CD8-positive, alpha-beta T cell (primary cell): ENCODE measurements at regions of chr5 and their contacts with region 1.

Region 1: DNA sequence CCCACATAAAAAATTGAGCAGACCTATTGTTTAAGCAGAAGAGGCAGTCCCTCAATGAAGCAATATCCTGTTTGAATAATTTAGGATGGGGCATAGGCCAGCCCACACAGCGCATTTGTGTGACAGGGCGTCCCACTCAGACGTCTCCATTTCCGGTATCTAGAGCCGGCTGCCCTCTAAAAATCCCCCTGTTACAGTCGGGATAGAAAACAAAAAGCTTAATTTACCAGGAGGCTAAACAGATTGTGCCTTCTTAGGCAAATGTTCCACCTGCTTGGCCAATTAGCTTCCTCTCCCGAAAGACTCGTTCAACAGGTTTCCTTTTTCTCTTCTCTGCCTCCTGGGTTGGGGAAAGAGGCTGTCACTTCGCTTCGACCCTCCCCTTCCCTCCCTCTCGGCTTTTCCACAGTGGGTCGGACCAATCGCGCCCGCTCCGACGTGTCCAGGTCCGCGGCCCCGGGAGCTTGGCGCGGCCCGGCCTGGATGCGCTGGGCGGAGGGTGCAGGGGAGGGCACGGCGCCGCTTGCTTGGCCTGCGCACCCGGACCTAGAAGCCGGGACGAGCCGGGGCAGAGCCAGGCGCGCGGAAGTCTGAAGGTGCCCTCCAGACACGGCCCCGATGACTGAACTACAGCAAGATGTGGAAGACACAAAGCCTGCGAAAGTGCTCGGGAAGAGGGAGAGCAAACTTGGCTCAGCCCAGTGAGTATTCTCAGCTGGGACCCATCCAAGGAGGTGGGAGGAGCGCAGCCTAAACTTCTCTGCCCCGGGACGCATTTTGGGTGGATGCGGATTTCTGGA is at the start of gene GRAMD2B:
- DNase-seq: peak; percentile 34 to 90 (median 65)
- ATAC-seq: peak; percentile 93
- H3K4me3 ChIP-seq: peak within 1 kb of the TSS; percentile 78 to 84
- H3K4me3 Mint-ChIP-seq: peak within 1 kb of the TSS; percentile 91
- H3K27ac ChIP-seq: peak within 1 kb of the TSS; percentile 90 to 95
- H3K27ac Mint-ChIP-seq: peak within 1 kb of the TSS; percentile 95
- H3K4me1 ChIP-seq: peaks cover 21% of the 10 kb centered on the region
- H3K4me1 Mint-ChIP-seq: peaks cover 38% of the 10 kb centered on the region
- H3K27me3 ChIP-seq: no peaks in the 10 kb centered on the region
- H3K27me3 Mint-ChIP-seq: no peaks in the 10 kb centered on the region
- CTCF ChIP-seq: no peak
- total RNA-seq, gene GRAMD2B: 8.2 to 10.4 TPM

Region 2: DNA sequence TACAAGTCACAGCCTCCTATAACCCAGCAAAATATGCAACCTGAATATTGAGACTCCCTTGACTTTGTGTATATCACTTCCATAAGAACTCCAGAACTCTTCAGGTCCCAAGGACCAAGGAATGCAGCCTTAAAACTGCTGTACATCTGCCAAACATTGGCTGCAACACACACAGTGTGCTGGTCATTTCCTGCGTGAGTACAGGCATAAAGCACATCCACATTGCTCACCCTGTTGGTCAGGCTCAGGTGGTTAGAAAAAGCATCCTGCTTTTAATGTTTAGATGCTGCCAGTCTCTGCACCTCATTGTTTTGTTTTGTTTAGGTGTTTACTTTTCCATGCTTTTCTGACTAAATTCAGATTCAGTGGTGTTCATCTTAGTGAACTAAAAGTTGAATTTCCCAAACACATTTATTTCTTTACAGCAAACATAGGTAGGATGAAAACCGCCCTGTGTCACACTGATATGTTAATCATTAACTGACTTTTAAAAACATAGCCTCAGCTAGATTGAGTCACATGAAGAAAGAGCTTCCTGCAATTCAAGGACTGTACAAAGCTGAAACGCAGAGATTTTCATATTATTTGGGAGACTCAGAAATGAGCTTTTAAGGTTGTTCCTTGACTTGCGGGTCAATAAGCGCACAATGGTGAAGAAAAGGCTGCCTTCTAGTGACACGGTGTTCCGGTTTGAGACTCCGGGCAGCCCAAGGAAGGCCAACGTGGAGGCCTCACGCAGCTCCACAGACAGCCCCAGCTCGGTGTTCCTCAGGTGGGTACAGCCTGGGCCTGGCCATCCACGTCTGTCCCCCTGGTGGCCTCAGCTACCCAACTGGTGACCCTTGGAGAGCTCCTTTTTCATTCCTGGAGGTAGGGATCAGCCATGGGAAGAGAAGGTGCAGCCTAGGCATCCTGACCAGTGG is 52.1 kb before region 1 on chr5:
- CTCF ChIA-PET with region 1: no interaction called
- POLR2A ChIA-PET with region 1: no interaction called
- intact Hi-C with region 1: loop called in 1 of 2 experiments (anchors 5 kb)
- DNase-seq: no peak
- ATAC-seq: no peak
- H3K4me3 ChIP-seq: no peak overlapping the region
- H3K4me3 Mint-ChIP-seq: no peak overlapping the region
- H3K27ac ChIP-seq: no peak overlapping the region
- H3K27ac Mint-ChIP-seq: no peak overlapping the region
- H3K4me1 ChIP-seq: peaks cover 14% of the 10 kb centered on the region
- H3K4me1 Mint-ChIP-seq: peaks cover 18% of the 10 kb centered on the region
- H3K27me3 ChIP-seq: no peaks in the 10 kb centered on the region
- H3K27me3 Mint-ChIP-seq: no peaks in the 10 kb centered on the region
- CTCF ChIP-seq: no peak

Region 3: GRCh38 chr5:126403876-126404275 is 19.3 kb before region 1 on chr5:
- CTCF ChIA-PET with region 1: no interaction called
- POLR2A ChIA-PET with region 1: no interaction called
- intact Hi-C with region 1: no loop called
- DNase-seq: no peak
- ATAC-seq: no peak
- H3K4me3 ChIP-seq: no peak overlapping the region
- H3K4me3 Mint-ChIP-seq: no peak overlapping the region
- H3K27ac ChIP-seq: no peak overlapping the region
- H3K27ac Mint-ChIP-seq: no peak overlapping the region
- H3K4me1 ChIP-seq: no peaks in the 10 kb centered on the region
- H3K4me1 Mint-ChIP-seq: no peaks in the 10 kb centered on the region
- H3K27me3 ChIP-seq: peaks cover under 1 to 3% of the 10 kb centered on the region in 2 experiments
- H3K27me3 Mint-ChIP-seq: no peaks in the 10 kb centered on the region
- CTCF ChIP-seq: no peak

Region 4: DNA sequence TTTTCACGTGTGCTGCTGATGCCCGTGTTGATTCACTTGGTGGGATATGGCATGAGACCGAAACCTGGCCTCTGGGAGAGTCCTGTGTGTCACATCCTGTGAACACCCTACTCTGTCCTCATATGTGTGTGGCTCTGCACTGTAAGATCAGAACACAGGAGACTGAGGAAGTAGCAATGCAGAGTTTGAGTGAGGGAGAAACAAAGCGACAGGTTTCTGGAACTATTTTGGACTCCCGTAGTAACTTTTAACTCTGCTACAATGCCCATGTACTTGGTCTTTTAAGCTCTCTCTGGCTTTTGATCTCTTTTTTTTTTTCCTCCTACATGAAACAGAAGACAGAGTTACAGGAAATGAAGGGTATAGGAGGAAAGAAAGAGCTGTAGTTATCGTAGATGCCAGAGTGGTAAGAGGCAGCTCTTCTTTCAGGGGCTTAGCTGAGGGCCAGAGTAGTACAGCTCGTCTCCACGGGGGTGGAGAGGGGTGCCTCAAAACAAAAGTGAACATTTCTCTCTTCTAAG is 26.6 kb after region 1 on chr5:
- CTCF ChIA-PET with region 1: interaction called, 3 read pairs
- POLR2A ChIA-PET with region 1: interaction called, 36 read pairs
- intact Hi-C with region 1: loop called (anchors 1 to 2 kb)
- DNase-seq: peak; percentile 2 to 86 (median 53)
- ATAC-seq: peak; percentile 84
- H3K4me3 ChIP-seq: peak overlapping the region; percentile 42 to 56
- H3K4me3 Mint-ChIP-seq: peak overlapping the region; percentile 87
- H3K27ac ChIP-seq: peak overlapping the region; percentile 85 to 89
- H3K27ac Mint-ChIP-seq: peak overlapping the region; percentile 99
- H3K4me1 ChIP-seq: peaks cover 47% of the 10 kb centered on the region
- H3K4me1 Mint-ChIP-seq: peaks cover 68% of the 10 kb centered on the region
- H3K27me3 ChIP-seq: no peaks in the 10 kb centered on the region
- H3K27me3 Mint-ChIP-seq: no peaks in the 10 kb centered on the region
- CTCF ChIP-seq: no peak

Region 5: GRCh38 chr5:126499853-126500342 is 76.7 kb after region 1 on chr5:
- CTCF ChIA-PET with region 1: interaction called, 12 read pairs
- POLR2A ChIA-PET with region 1: interaction called, 5 read pairs
- intact Hi-C with region 1: loop called (anchors 1 to 5 kb)
- DNase-seq: peak in 5 of 9 experiments; percentile 20 to 73 (median 34)
- ATAC-seq: peak; percentile 82
- H3K4me3 ChIP-seq: no peak overlapping the region
- H3K4me3 Mint-ChIP-seq: peak overlapping the region; percentile 6
- H3K27ac ChIP-seq: no peak overlapping the region
- H3K27ac Mint-ChIP-seq: peak overlapping the region; percentile 84
- H3K4me1 ChIP-seq: peaks cover 13% of the 10 kb centered on the region
- H3K4me1 Mint-ChIP-seq: peaks cover 35% of the 10 kb centered on the region
- H3K27me3 ChIP-seq: no peaks in the 10 kb centered on the region
- H3K27me3 Mint-ChIP-seq: no peaks in the 10 kb centered on the region
- CTCF ChIP-seq: peak; percentile 60

Region 6: DNA sequence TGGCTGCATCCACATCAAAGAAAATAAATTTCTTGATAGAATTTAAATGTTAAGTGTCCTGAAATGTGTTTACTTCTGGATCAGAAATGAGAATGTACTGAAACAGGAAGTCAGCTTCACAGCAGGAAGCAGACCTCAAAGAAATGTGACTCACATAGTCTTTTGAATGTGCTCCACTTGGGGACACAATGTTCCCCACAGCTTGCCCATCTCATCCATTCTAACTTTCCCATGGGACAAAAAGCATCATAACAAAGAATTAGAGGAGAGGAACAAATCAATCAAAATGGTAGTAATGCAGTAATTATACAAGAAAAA is 85.7 kb after region 1 on chr5:
- CTCF ChIA-PET with region 1: no interaction called
- POLR2A ChIA-PET with region 1: no interaction called
- intact Hi-C with region 1: loop called in 1 of 2 experiments (anchors 2 kb)
- DNase-seq: peak in 2 of 9 experiments; percentile 38 to 58
- ATAC-seq: peak; percentile 81
- H3K4me3 ChIP-seq: peak overlapping the region; percentile 29 to 36
- H3K4me3 Mint-ChIP-seq: peak overlapping the region; percentile 79
- H3K27ac ChIP-seq: peak overlapping the region; percentile 23 to 51
- H3K27ac Mint-ChIP-seq: peak overlapping the region; percentile 85
- H3K4me1 ChIP-seq: peaks cover 35% of the 10 kb centered on the region
- H3K4me1 Mint-ChIP-seq: peaks cover 52% of the 10 kb centered on the region
- H3K27me3 ChIP-seq: no peaks in the 10 kb centered on the region
- H3K27me3 Mint-ChIP-seq: no peaks in the 10 kb centered on the region
- CTCF ChIP-seq: no peak

Region 7: GRCh38 chr5:126600631-126601511 is 177.7 kb after region 1 on chr5 and contains the start of gene PHAX:
- CTCF ChIA-PET with region 1: no interaction called
- POLR2A ChIA-PET with region 1: no interaction called
- intact Hi-C with region 1: loop called in 1 of 2 experiments (anchors 10 kb)
- DNase-seq: peak; percentile 47 to 87 (median 70)
- ATAC-seq: peak; percentile 94
- H3K4me3 ChIP-seq: peak within 1 kb of the TSS; percentile 88 to 98
- H3K4me3 Mint-ChIP-seq: peak within 1 kb of the TSS; percentile 98
- H3K27ac ChIP-seq: peak within 1 kb of the TSS; percentile 83 to 85
- H3K27ac Mint-ChIP-seq: peak within 1 kb of the TSS; percentile 96
- H3K4me1 ChIP-seq: peaks cover 29% of the 10 kb centered on the region
- H3K4me1 Mint-ChIP-seq: peaks cover 33% of the 10 kb centered on the region
- H3K27me3 ChIP-seq: no peaks in the 10 kb centered on the region
- H3K27me3 Mint-ChIP-seq: no peaks in the 10 kb centered on the region
- CTCF ChIP-seq: peak; percentile 66
- total RNA-seq, gene PHAX: 29.4 to 32.8 TPM

Region 8: DNA sequence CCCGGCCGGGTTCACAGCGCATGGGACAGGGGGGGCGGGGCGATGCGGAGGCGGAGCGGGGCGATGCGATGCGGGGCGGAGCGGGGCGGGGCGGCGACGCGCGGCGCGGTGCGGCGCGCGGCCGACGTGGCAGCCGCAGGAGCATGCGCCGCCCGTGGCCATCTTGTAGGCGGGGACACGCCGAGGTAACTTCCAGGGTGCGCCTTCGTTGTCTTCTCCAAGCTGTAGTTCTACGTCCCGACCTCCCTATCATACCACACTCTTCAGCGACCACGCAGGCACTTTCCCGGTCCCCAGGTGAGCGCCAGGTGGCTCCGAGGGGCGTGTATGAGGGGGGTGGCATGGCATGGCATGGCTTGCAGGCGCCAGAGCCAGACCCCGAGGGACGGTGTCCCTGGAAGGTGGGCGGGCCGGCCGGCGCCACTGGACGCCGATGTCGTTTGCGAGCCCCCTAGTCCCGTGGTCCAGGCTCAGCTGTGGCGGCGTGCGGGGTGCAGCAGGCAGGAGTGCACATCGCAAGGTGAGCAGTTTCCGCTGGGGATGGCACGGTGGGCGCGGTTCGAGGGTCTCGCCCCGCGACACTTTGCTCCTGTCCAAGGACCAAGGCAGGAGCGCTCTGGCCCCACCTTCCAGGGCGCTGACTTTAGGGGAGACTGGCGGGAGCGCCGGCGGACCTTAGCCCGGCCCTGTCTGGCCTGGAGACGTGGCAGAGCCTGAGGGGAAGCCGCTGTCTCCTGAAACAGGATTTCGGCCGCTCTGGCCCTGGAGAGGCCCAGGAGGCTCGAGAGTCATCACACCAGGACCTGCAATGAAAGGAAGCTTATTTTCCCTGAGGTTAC is 1094.5 kb after region 1 on chr5 and contains the start of gene PRRC1:
- CTCF ChIA-PET with region 1: no interaction called
- POLR2A ChIA-PET with region 1: no interaction called
- intact Hi-C with region 1: loop called in 1 of 2 experiments (anchors 5 kb)
- DNase-seq: peak; percentile 53 to 90 (median 81)
- ATAC-seq: peak; percentile 96
- H3K4me3 ChIP-seq: peak within 1 kb of the TSS; percentile 91 to 98
- H3K4me3 Mint-ChIP-seq: peak within 1 kb of the TSS; percentile 90
- H3K27ac ChIP-seq: peak within 1 kb of the TSS; percentile 75 to 76
- H3K27ac Mint-ChIP-seq: peak within 1 kb of the TSS; percentile 80
- H3K4me1 ChIP-seq: peaks cover 11% of the 10 kb centered on the region
- H3K4me1 Mint-ChIP-seq: peaks cover 37% of the 10 kb centered on the region
- H3K27me3 ChIP-seq: no peaks in the 10 kb centered on the region
- H3K27me3 Mint-ChIP-seq: peaks cover 8% of the 10 kb centered on the region
- CTCF ChIP-seq: no peak
- total RNA-seq, gene PRRC1: 30.4 to 37.3 TPM